Dendritic cell treated with granulocyte-macrophage colony-stimulating factor and Interleukin-4, amounts not matched to agents 40 ng/mL and 50 ng/mL, for 4 days (primary cell): ENCODE measurements at regions of chr5 and their contacts with region 1.

Region 1: GRCh38 chr5:94524841-94525697 is 93.3 kb downstream of the KIAA0825 start:
- H3K4me3 Mint-ChIP-seq: no peak overlapping the region
- H3K27ac Mint-ChIP-seq: no peak overlapping the region
- H3K4me1 Mint-ChIP-seq: no peaks in the 10 kb centered on the region
- H3K27me3 Mint-ChIP-seq: no peaks in the 10 kb centered on the region

Region 2: DNA sequence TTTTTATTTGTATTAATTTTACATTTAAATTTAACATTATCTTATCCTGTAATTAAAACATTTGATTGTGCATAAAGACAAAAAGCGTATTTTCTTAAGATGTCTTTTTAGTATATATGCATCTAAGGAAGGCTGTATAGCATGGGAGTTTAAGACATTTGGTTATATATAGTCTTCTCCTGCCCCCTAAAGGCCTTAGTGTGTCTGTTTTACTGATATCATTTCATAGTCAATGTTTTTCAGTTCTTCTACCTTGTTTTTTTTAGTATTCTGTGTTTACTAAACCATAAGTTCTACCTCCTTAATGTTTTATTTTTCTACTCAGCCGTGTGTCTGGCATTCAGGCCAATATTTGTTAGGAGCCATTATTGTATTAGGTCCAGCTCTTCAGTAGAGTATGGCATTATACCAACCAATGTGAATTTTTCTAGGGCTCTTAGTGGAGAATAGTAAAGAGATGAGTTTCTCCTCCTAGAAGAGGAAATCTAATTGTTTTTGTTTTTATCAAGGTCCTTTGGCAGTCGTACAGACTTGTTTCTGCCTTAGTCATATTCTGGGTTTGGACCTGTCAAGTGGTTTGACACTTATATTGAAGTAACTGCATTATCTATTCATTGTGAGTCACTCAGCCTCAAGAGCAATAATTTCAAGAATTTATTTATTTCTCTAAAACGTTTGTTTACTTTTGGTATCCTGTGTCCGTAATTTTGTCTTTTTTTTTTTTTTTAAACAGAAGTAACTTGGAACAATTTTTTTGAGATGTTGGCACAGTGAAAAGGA is 168.2 kb after region 1 on chr5:
- intact Hi-C with region 1: loop called (anchors 2 kb)
- H3K4me3 Mint-ChIP-seq: no peak overlapping the region
- H3K27ac Mint-ChIP-seq: no peak overlapping the region
- H3K4me1 Mint-ChIP-seq: no peaks in the 10 kb centered on the region
- H3K27me3 Mint-ChIP-seq: no peaks in the 10 kb centered on the region

Region 3: DNA sequence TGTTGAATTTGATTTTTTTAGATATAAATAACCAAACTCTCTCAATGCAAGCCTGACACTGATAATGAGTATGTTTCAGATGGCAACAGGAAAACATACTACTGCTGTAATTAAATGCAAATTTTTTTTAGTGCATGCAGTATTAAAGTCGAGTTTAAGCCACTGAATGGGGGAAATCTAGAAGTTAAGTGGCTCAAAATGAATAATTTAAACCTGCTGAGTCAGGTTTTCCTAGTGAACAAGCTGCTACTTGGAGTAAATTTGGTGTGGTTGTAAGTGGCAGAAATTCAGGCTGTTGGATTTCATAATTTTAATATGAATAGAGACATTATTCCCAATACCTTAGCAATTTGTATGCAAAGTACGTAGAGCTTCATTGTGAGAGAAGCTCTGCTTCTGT is 215.2 kb after region 1 on chr5:
- intact Hi-C with region 1: loop called (anchors 2 kb)
- H3K4me3 Mint-ChIP-seq: no peak overlapping the region
- H3K27ac Mint-ChIP-seq: no peak overlapping the region
- H3K4me1 Mint-ChIP-seq: no peaks in the 10 kb centered on the region
- H3K27me3 Mint-ChIP-seq: no peaks in the 10 kb centered on the region